ENCODE measurements at regions of chr9 and their contacts with region 1.

Region 1: DNA sequence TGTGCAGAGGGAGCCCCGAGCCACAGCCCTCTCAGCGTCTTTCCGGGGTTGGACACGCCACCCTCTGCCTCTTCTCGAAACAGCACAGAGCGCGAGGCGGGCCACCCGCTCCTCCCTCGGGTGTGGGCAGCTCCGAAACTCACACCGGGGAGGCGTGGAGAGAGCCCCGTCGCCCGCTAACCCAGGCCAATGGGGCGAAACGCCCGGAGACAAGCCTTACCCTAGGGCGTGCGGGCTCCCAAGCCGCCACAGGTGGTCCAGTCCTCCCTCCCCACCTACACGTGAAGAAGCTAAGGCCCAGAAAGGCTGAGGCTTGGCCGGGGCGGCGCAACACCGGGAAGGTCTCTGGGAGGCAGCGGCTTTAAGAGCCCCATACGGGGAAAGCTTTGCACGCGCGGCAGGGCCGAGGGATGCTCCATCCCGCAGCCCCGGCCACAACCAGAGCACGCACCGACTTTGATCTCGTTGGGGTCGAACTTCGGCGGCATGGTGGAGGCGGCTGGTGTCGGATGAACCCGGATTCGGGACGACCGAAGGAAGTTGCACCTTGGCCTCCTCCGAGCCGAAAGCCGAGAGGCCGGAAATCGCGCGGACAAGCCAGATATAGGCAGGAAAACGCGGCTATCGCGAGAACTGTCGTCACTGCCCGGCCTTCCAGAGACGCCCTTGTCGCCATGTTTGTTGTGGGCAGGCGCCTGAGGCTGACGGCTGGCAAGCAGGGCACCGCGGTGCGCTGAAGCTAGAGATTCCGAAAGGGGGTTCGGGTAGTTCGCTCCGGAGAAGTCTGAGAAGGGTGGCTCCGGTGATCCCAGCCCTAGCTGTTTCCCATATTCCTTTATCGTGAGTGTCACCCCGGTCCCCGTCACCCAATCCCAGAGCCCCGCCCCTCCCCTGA is at the starts of genes LRSAM1 and RPL12:
- DNase-seq: peak; percentile 96
- H3K4me3 Mint-ChIP-seq: peak within 1 kb of the TSS; percentile 92
- H3K27ac Mint-ChIP-seq: peak within 1 kb of the TSS; percentile 98
- H3K4me1 Mint-ChIP-seq: peaks cover 55% of the 10 kb centered on the region
- H3K27me3 Mint-ChIP-seq: no peaks in the 10 kb centered on the region
- total RNA-seq, gene LRSAM1: 23.8 and 25.8 TPM in 2 replicates
- total RNA-seq, gene RPL12: 1,157 and 1,162 TPM in 2 replicates

Region 2: DNA sequence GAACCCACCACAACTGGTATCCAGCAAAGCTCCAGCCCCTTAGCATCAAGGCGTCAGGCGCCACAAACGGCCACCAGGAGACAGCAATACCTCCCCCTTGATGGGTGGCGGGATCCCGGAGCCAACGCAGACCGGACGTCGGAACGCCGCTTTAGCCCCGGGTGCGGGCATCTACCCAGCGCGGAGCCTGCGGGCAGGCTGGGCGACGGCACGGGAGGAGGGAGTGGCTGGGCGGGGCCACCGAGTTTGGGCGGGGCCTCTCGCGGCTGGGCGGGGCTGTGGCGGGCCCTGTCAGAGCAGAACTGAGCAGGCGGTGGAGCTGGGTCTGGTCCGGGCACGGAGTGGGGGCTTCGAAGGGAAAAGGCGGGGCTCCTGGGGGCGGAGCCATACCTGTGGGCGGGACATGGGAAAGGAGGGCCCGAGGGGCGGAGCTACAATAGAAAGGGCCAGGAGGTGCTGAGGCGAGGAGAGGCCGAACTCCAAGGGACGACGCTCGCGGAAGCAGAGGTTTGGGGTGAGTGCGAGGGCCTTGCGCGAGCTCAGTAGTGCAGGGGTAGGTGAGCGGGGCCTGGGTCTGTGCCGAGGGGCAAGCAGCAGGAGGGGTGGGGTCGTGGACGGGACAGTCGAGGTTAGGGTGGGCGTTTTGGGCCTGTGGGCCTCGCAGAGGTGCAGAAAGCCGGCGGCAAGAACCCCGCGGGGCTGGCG is 226.7 kb before region 1 on chr9:
- intact Hi-C with region 1: loop called (anchors 10 kb)
- DNase-seq: peak; percentile 82
- H3K4me3 Mint-ChIP-seq: peak overlapping the region; percentile 85
- H3K27ac Mint-ChIP-seq: peak overlapping the region; percentile 97
- H3K4me1 Mint-ChIP-seq: peaks cover 18% of the 10 kb centered on the region
- H3K27me3 Mint-ChIP-seq: peaks cover 42% of the 10 kb centered on the region

Region 3: GRCh38 chr9:127283917-127284316 is 167.2 kb before region 1 on chr9:
- intact Hi-C with region 1: loop called (anchors 10 kb)
- DNase-seq: no peak
- H3K4me3 Mint-ChIP-seq: no peak overlapping the region
- H3K27ac Mint-ChIP-seq: no peak overlapping the region
- H3K4me1 Mint-ChIP-seq: no peaks in the 10 kb centered on the region
- H3K27me3 Mint-ChIP-seq: peaks cover 20% of the 10 kb centered on the region

Region 4: GRCh38 chr9:127388037-127388855 is 62.8 kb before region 1 on chr9:
- intact Hi-C with region 1: loop called (anchors 2 kb)
- DNase-seq: peak; percentile 86
- H3K4me3 Mint-ChIP-seq: peak overlapping the region; percentile 37
- H3K27ac Mint-ChIP-seq: peak overlapping the region; percentile 89
- H3K4me1 Mint-ChIP-seq: peaks cover 24% of the 10 kb centered on the region
- H3K27me3 Mint-ChIP-seq: peaks cover 51% of the 10 kb centered on the region

Region 5: GRCh38 chr9:127423934-127424675 is 27.0 kb before region 1 on chr9 and contains the start of gene ZNF79:
- intact Hi-C with region 1: loop called (anchors 1 kb)
- DNase-seq: peak; percentile 92
- H3K4me3 Mint-ChIP-seq: peak within 1 kb of the TSS; percentile 99
- H3K27ac Mint-ChIP-seq: peak within 1 kb of the TSS; percentile 97
- H3K4me1 Mint-ChIP-seq: peaks cover 59% of the 10 kb centered on the region
- H3K27me3 Mint-ChIP-seq: peaks cover 3% of the 10 kb centered on the region
- total RNA-seq, gene ZNF79: 21.7 and 23.1 TPM in 2 replicates

Region 6: GRCh38 chr9:127463911-127464310 is 12.8 kb after region 1 on chr9:
- intact Hi-C with region 1: no loop called
- DNase-seq: no peak
- H3K4me3 Mint-ChIP-seq: no peak overlapping the region
- H3K27ac Mint-ChIP-seq: no peak overlapping the region
- H3K4me1 Mint-ChIP-seq: no peaks in the 10 kb centered on the region
- H3K27me3 Mint-ChIP-seq: no peaks in the 10 kb centered on the region

Region 7: DNA sequence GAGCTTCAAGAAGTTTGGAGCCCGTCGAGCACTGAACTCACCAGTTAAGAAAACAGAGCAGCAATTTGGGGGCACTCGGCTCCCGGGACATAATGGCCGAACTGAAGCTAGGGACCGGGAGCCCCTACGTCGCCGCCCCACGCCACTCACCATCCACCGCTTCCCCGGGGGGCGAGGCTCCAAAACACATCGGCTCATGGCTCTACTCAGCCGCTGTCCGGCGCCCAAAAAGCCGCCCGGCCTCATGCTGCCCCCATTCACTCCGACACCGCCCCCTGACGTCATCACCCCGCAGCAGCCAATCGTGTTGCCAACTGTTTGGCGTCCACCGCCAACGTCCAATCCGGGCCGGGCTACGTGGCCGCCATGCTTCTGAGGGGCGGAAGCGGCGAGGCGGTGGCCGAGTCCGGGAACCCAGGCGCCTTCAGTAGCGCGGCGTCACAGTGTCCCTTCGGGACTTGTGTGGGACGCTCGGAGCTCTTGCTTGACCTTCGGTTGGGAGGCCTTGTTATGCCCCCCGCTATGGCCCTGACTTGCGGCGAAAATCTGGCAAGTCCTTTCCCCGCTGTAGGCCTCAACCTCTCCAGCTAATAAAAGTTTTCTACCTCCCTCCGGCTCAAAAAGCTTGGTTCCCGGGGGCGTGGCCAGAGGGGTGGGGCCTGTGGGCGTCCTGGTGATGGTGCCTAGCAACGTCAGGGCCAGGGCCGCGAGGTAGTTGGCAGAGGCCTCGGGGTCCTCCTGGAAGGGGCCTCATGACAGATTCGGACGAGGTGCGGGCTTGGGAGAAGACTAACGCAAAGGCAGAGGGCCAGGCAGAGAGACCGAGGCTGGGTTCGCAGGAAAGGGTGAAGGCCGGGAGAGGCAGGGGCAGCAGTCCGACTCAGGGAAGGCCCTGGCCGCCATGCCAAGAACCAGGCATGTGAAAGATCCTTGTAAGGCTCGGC is 264.6 kb after region 1 on chr9 and contains the starts of genes PTRH1 and TTC16:
- intact Hi-C with region 1: loop called (anchors 1 kb)
- DNase-seq: peak; percentile 97
- H3K4me3 Mint-ChIP-seq: peak within 1 kb of the TSS; percentile 98
- H3K27ac Mint-ChIP-seq: peak within 1 kb of the TSS; percentile 98
- H3K4me1 Mint-ChIP-seq: peaks cover 28% of the 10 kb centered on the region
- H3K27me3 Mint-ChIP-seq: peaks cover 2% of the 10 kb centered on the region
- total RNA-seq, gene PTRH1: 22.9 and 23.5 TPM in 2 replicates
- total RNA-seq, gene TTC16: 0.10 TPM in 1 of 2 replicates, not detected in the other

Measured in activated T-helper 1 cell treated with anti-CD3 and anti-CD28 coated beads, Interleukin-12 subunit alpha, Interleukin-12 subunit beta, Interleukin-2, Interleukin-4 antibody, amounts not matched to agents 30 ng/mL and 10 ng/mL and 1 ng/mL, durations not matched to agents 14 hours and 24 hours and 36 hours (primary cell).